ENCODE measurements at regions of chr12 and their contacts with region 1.

Region 1: DNA sequence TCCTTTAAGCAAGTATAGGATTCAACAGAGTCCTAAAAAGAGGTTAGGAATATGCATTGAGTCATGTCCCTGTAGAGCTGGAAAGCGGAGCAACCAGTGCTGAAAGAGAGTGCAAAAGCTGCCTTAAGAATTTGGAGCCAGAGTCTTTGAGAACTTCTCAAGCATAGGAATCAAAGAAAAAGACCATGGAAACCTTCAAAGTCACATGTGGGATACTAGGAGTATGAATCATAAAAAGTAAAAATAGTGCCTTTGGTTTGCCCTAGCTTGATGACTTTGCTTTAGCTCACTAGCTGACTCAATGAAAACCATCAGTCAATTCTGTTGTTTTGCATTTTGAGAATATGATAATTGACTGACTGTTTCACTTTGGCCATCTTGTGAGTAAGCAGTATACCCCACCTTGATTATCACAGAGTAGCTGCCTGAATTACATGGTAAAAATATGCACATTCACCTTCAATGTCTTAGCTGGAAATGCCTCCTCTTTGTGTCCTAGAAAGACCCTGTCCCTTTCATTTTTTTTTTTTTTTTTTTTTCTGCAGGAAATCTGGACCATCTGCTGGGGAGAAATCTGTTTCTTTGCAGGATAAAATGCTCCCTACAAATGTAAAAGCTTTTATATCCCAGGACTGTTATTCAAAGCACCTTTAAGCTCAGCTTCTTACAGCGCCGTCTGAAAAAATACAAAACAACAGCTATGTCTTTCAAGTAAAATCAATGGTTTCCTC is 248.6 kb upstream of the KRR1 start:
- DNase-seq: no peak
- ATAC-seq: no peak
- H3K4me3 ChIP-seq: no peak overlapping the region
- H3K4me3 Mint-ChIP-seq: no peak overlapping the region
- H3K27ac ChIP-seq: no peak overlapping the region
- H3K27ac Mint-ChIP-seq: no peak overlapping the region
- H3K4me1 ChIP-seq: no peaks in the 10 kb centered on the region
- H3K4me1 Mint-ChIP-seq: no peaks in the 10 kb centered on the region
- H3K27me3 ChIP-seq: no peaks in the 10 kb centered on the region
- H3K27me3 Mint-ChIP-seq: no peaks in the 10 kb centered on the region
- CTCF ChIP-seq: no peak

Region 2: GRCh38 chr12:75805905-75806304 is 45.9 kb after region 1 on chr12:
- CTCF ChIA-PET with region 1: no interaction called
- POLR2A ChIA-PET with region 1: no interaction called
- intact Hi-C with region 1: loop called in 1 of 2 experiments (anchors 10 kb)
- DNase-seq: no peak
- ATAC-seq: no peak
- H3K4me3 ChIP-seq: no peak overlapping the region
- H3K4me3 Mint-ChIP-seq: no peak overlapping the region
- H3K27ac ChIP-seq: no peak overlapping the region
- H3K27ac Mint-ChIP-seq: no peak overlapping the region
- H3K4me1 ChIP-seq: no peaks in the 10 kb centered on the region
- H3K4me1 Mint-ChIP-seq: no peaks in the 10 kb centered on the region
- H3K27me3 ChIP-seq: no peaks in the 10 kb centered on the region
- H3K27me3 Mint-ChIP-seq: no peaks in the 10 kb centered on the region
- CTCF ChIP-seq: no peak